Right ventricle myocardium inferior (tissue), 1 donor: ENCODE measurements at regions of chr1 and their contacts with region 1.

Region 1: DNA sequence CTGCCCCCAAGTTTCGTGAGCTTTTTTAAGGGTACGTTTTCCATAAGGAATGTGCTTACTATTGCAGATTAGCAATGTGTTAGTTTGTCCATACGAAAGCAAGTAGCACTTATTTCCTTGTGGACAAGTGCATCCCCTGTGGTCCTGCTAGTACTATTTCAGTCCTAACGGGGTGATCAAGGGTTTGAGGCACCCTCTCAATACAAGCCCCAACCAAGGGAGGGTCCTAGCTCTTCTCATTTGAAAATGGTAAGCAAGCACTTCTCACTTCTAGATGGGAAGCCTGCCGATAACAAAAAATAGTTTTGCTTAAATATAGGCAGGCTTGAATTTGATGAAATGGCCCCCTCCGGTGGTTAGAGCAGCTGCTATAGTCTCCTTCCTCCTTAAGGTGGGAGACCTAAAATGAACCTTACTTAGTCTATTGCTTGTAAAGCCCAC is 64.0 kb upstream of the HMCN1 start:
- DNase-seq: no peak
- ATAC-seq: peak; percentile 72

Region 2: GRCh38 chr1:185238447-185238846 is 431.8 kb before region 1 on chr1:
- intact Hi-C with region 1: loop called (anchors 2 kb)
- DNase-seq: no peak
- ATAC-seq: no peak

Region 3: GRCh38 chr1:185317034-185317885 is 352.9 kb before region 1 on chr1 and contains the start of gene IVNS1ABP:
- intact Hi-C with region 1: loop called (anchors 2 kb)
- DNase-seq: peak; percentile 97
- ATAC-seq: peak; percentile 91
- total RNA-seq, gene IVNS1ABP: 59.0 TPM

Region 4: DNA sequence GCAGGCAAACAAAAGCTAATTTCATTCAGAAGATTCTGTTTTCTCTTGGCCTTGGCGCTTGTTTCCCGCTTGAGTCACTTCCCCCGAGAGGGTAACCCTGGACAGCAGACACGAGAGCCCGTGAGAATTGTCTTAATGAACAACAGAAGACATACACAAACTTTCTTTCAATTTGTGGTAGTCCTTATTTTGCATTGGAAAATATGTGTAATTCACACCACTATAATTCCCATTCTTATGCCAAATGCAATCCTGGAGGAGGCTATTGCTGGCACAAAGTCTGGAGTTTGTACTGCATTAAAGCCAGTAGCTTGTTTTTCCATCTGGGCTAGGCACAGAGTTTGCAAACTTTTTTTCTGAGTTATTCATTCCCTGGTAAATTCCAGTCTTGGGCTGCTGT is 243.4 kb before region 1 on chr1:
- intact Hi-C with region 1: loop called (anchors 2 kb)
- DNase-seq: peak; percentile 63
- ATAC-seq: peak; percentile 88

Region 5: DNA sequence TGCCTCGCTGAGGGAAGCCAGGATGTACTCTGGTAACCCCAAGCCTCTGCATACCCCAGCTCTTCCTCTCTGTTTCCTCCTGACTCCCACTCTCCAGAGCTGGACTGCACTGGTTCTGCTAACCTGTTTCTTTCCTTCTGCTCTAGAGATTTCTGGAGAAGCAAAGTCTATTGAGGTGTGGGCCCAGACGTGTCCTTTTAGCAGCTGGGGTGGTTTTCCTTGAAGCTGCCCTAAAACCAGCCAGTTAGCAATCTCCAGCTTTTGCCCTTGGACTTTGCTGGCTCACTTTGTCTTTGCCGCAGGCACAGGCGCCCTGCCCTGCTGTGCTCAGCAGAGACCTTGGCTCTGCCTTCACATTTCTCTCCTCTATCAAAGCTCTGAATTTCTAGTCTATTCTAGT is 181.4 kb before region 1 on chr1:
- intact Hi-C with region 1: loop called (anchors 5 kb)
- DNase-seq: no peak
- ATAC-seq: peak; percentile 78

Region 6: GRCh38 chr1:185595835-185596667 is 74.2 kb before region 1 on chr1:
- intact Hi-C with region 1: loop called (anchors 5 kb)
- DNase-seq: no peak
- ATAC-seq: peak; percentile 38

Region 7: DNA sequence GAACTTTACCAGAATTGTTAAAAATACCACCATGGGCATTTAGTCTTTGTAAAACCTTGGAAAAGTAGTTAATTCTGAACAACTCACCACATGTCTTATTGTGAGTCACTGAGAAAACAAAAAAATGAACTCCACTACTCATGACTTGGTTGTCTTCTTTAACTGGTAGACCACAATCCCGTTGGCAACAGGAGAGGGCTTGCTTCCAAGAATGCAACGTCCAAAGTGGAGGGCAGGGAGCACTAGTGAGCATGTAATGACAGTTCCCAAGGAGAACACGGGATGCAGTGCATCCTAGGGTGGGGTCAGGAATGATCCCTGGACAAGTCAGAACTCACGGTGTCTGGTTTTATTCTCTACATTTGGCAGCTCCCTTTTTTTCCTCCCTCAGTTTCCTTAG is 48.8 kb after region 1 on chr1:
- intact Hi-C with region 1: no loop called
- DNase-seq: no peak
- ATAC-seq: no peak